H1 (cell line): ENCODE measurements at regions of chr19 and their contacts with region 1.

Region 1: DNA sequence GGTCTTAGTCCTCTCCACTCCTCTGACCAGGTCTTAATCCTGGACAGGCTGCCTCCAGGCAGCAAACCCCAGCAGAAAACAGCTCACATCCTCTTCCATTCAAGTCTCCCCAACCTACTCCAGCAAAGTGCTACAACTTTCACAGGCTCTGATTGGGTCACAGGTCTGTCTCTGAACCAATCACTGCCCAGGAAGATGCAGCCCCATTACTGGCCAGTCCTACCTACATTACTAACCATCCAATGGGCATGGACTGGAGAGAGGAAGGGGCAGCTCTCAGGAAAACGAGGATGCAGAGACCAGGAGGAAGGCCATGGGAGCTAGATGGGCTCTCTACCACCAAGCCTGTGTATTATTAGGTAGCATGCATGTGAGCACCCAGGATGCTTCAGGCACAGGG is 12.2 kb downstream of the MED26 start:
- DNase-seq: no peak
- H3K4me3 ChIP-seq: no peak overlapping the region
- H3K27ac ChIP-seq: no peak overlapping the region
- H3K4me1 ChIP-seq: peaks cover 0 to 7% (median 3%) of the 10 kb centered on the region in 4 experiments; a peak in 4 of 7 replicates
- H3K27me3 ChIP-seq: no peaks in the 10 kb centered on the region
- CTCF ChIP-seq: no peak
- EP300 ChIP-seq: no peak
- POLR2A ChIP-seq: no peak
- RAD21 ChIP-seq: no peak

Region 2: DNA sequence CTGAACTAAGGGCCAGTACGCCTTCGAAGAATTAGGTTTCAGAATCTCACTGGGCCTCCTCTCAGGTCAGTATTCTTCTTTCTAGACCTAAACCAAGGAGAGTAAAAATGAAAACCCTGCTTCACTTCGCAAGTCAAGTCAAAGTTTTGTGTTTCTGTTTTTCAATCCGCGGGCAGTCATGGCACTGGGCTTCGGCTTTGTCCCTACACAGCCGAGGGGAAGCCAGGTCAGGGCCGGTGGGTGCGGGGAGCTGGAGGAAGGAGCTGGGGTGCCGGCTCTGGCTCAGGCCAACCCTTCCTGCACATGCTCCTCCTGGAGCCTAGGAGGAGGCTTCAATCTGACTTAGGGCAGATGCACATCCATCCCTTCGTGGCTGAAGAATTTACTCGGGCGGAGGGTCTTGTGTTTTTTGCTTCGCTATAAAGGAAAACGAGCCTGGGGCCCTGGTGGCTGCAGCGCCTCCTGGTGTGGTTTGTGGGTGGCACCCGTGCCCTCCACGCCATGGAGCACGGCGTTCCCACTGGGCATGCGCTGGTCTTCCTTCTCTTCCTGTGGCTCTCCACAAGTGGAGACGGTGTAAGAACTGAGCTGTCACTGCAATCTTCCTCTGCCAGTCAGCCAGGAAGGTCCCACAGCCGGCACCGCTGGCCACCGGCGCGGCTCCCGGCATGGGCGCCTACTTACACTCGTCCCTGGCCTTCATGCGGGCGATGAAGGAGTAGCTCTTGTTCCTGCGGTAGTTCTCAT is 97.2 kb before region 1 on chr19:
- CTCF ChIA-PET with region 1: no interaction called
- POLR2A ChIA-PET with region 1: no interaction called
- DNase-seq: no peak
- H3K4me3 ChIP-seq: no peak overlapping the region
- H3K27ac ChIP-seq: no peak overlapping the region
- H3K4me1 ChIP-seq: no peaks in the 10 kb centered on the region
- H3K27me3 ChIP-seq: no peaks in the 10 kb centered on the region
- CTCF ChIP-seq: peak; percentile 33 to 55 (median 45)
- EP300 ChIP-seq: no peak
- POLR2A ChIP-seq: no peak
- RAD21 ChIP-seq: peak; percentile 16 to 32; a peak in 3 of 4 replicates

Region 3: GRCh38 chr19:16536130-16536529 is 79.7 kb before region 1 on chr19:
- CTCF ChIA-PET with region 1: interaction called, 10 read pairs
- POLR2A ChIA-PET with region 1: no interaction called
- DNase-seq: no peak
- H3K4me3 ChIP-seq: no peak overlapping the region
- H3K27ac ChIP-seq: no peak overlapping the region
- H3K4me1 ChIP-seq: peaks cover 0 to 4% (median 3%) of the 10 kb centered on the region in 4 experiments; a peak in 4 of 7 replicates
- H3K27me3 ChIP-seq: no peaks in the 10 kb centered on the region
- CTCF ChIP-seq: peak in 1 of 3 experiments; percentile 7; a peak in 1 of 4 replicates
- EP300 ChIP-seq: no peak
- POLR2A ChIP-seq: no peak
- RAD21 ChIP-seq: no peak

Region 4: GRCh38 chr19:16584248-16585141 is 31.3 kb before region 1 on chr19:
- CTCF ChIA-PET with region 1: interaction called, 12 read pairs
- POLR2A ChIA-PET with region 1: interaction called, 3 read pairs
- DNase-seq: peak; percentile 27 to 73
- H3K4me3 ChIP-seq: peak overlapping the region in 2 of 4 experiments; percentile 17 to 45; a peak in 4 of 8 replicates
- H3K27ac ChIP-seq: no peak overlapping the region
- H3K4me1 ChIP-seq: peaks cover 4 to 39% (median 25%) of the 10 kb centered on the region in 4 experiments
- H3K27me3 ChIP-seq: no peaks in the 10 kb centered on the region
- CTCF ChIP-seq: no peak
- EP300 ChIP-seq: no peak
- POLR2A ChIP-seq: no peak
- RAD21 ChIP-seq: no peak

Region 5: GRCh38 chr19:16628183-16628983 is 12.6 kb after region 1 on chr19 and contains the start of gene MED26:
- CTCF ChIA-PET with region 1: interaction called, 3 read pairs
- POLR2A ChIA-PET with region 1: interaction called, 22 read pairs
- DNase-seq: peak; percentile 79 to 96
- H3K4me3 ChIP-seq: peak within 1 kb of the TSS; percentile 77 to 99 (median 82)
- H3K27ac ChIP-seq: peak within 1 kb of the TSS; percentile 79; the same call in 1 of the 2 replicates
- H3K4me1 ChIP-seq: peaks cover 2 to 10% (median 4%) of the 10 kb centered on the region in 4 experiments; a peak in 6 of 7 replicates
- H3K27me3 ChIP-seq: no peaks in the 10 kb centered on the region
- CTCF ChIP-seq: no peak
- EP300 ChIP-seq: no peak
- POLR2A ChIP-seq: peak; percentile 62 to 63
- RAD21 ChIP-seq: 0 out of 4 replicates have a peak, but pooled peaks of 1 of the 2 experiments have one; percentile 10
- total RNA-seq, gene MED26: 10.7 and 12.3 TPM in 2 replicates

Region 6: GRCh38 chr19:16751733-16752132 is 135.9 kb after region 1 on chr19:
- CTCF ChIA-PET with region 1: no interaction called
- POLR2A ChIA-PET with region 1: no interaction called
- DNase-seq: no peak
- H3K4me3 ChIP-seq: no peak overlapping the region
- H3K27ac ChIP-seq: no peak overlapping the region
- H3K4me1 ChIP-seq: no peaks in the 10 kb centered on the region; a peak in 1 of 7 replicates
- H3K27me3 ChIP-seq: no peaks in the 10 kb centered on the region; a peak in 1 of 7 replicates
- CTCF ChIP-seq: no peak
- EP300 ChIP-seq: no peak
- POLR2A ChIP-seq: no peak
- RAD21 ChIP-seq: no peak